Common myeloid progenitor, CD34-positive (primary cell): ENCODE measurements at regions of chr13 and their contacts with region 1.

Region 1: DNA sequence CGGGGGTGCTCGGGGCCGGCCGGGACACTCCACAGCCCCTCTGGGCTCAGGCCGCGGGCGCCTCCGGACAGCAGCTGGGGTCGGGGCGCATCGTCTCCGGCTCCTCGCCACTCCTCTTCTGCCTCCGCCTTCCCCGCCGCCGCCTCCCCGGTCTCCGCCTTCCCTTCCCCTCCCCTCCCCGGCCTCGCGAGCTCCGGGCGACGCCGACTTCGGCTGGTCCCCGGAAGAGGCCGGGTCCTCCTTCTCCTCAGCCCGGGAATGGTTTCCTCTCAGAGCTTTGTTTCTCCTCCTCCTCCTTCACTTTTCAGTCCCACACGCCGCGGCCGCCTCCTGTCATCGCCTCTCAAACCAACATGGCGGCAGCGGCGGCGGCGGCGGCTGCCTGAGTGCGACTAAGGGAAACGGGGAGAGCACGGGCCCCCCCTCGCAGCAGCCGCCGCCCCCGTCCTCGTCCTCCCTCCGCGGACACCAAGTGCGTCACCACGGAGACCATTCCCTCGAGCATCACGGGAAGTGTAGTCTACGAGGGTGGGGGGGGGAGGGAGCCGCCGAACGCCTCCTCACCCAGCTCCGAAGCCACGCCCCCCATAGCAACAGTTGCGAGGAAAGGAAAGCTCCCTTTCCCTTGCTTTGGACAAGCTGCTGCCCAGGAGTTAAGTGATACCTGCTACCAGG is at the start of gene UBL3:
- DNase-seq: peak; percentile 96 to 98 (median 97)
- H3K4me3 ChIP-seq: peak within 1 kb of the TSS; percentile 87 to 100 (median 98)
- H3K27ac ChIP-seq: peak within 1 kb of the TSS; percentile 58 to 81
- H3K4me1 ChIP-seq: peaks cover 8 to 24% (median 14%) of the 10 kb centered on the region in 4 experiments
- H3K27me3 ChIP-seq: no peaks in the 10 kb centered on the region

Region 2: DNA sequence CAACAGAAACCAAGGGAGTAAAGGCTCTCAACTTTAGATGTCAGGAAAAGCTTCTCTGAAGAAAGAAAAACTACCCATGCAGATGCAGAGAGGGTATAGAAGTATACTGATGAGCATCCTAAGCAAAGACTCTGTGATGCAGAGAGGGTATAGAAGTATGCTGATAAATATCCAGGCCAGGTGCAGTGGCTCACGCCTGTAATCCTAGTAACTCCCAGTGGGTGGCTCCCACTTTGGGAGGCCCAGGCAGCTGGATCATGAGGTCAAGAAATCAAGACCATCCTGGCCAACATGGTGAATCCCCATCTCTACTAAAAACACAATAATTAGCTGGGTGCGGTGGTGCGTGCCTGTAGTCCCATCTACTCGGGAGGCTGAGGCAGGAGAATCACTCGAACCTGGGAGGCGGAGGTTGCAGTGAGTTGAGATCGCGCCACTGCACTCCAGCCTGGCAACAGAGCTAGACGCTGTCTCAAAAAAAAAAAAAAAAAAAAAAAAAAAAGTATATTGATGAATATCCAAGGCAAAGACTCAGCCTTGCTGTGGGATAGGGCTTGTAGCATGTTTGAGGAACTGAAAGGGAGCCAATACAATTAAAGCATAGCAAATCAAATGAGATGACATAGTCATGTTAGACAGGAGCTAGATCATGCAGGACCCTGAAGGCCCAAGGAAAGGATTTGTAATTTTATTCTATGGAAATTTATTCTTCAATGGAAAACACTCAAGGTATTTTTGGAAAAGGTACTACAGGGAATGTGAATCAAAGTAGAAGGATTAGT is 14.9 kb before region 1 on chr13:
- CTCF ChIA-PET with region 1: interaction called, 14 read pairs
- POLR2A ChIA-PET with region 1: no interaction called
- DNase-seq: no peak
- H3K4me3 ChIP-seq: no peak overlapping the region
- H3K27ac ChIP-seq: no peak overlapping the region
- H3K4me1 ChIP-seq: no peaks in the 10 kb centered on the region
- H3K27me3 ChIP-seq: no peaks in the 10 kb centered on the region

Region 3: DNA sequence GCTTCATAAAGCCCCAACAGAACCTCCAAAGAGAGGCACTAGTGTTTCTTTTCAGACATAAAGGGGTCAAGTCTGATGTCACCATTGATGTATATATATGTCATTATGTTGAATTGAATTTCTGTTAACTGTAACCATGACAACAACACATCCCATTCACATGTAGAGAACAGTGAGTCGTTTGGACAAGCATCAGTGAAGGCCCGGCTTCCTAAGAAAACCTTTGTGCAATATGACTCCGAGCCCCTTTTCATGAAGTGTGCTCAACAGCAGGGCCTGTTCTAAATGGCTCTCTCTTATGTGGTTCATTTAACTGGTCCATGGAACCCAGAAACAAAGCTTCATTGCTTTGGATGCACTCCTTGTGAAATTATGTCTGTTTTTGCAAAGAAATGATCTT is 67.3 kb after region 1 on chr13:
- CTCF ChIA-PET with region 1: no interaction called
- POLR2A ChIA-PET with region 1: no interaction called
- DNase-seq: no peak
- H3K4me3 ChIP-seq: no peak overlapping the region
- H3K27ac ChIP-seq: no peak overlapping the region
- H3K4me1 ChIP-seq: no peaks in the 10 kb centered on the region
- H3K27me3 ChIP-seq: no peaks in the 10 kb centered on the region